HCT116 (cell line): ENCODE measurements at regions of chr20 and their contacts with region 1.

Region 1: GRCh38 chr20:25076731-25077609 is 5.0 kb downstream of the VSX1 start:
- DNase-seq: peak; percentile 73
- ATAC-seq: peak; percentile 92
- H3K4me3 ChIP-seq: no peak overlapping the region; a peak in 1 of 4 replicates
- H3K27ac ChIP-seq: no peak overlapping the region
- H3K4me1 ChIP-seq: peaks cover 17 to 21% of the 10 kb centered on the region in 2 experiments
- H3K27me3 ChIP-seq: peaks cover 41% of the 10 kb centered on the region
- CTCF ChIP-seq: peak; percentile 23 to 64 (median 62); a peak in 5 of 6 replicates
- POLR2A ChIP-seq: no peak
- RAD21 ChIP-seq: peak; percentile 26; the same call in 1 of the 2 replicates

Region 2: DNA sequence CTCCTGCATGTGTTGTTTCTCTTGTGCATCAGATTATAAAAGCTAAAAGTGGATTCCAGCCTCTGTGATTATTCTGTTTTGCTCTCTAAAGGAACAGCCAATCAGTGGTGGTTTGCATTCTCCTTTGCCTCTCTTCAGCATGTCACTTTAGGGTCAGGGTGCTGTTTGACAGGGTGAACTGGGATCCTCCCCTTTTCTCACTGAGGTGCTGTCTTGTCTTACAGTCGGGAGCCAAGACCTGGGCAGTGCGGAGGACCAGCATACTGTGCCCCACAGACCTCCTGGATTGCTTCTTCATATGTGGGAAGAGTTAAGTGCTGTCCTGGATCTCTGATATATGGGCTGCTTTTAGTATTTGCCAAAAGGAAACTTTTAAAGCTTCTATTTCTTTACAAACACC is 1235.3 kb before region 1 on chr20:
- CTCF ChIA-PET with region 1: no interaction called
- POLR2A ChIA-PET with region 1: no interaction called
- RAD21 ChIA-PET with region 1: no interaction called
- intact Hi-C with region 1: no loop called
- DNase-seq: no peak
- ATAC-seq: no peak
- H3K4me3 ChIP-seq: no peak overlapping the region
- H3K27ac ChIP-seq: no peak overlapping the region
- H3K4me1 ChIP-seq: no peaks in the 10 kb centered on the region
- H3K27me3 ChIP-seq: peaks cover 4% of the 10 kb centered on the region
- CTCF ChIP-seq: no peak
- POLR2A ChIP-seq: no peak
- RAD21 ChIP-seq: no peak

Region 3: GRCh38 chr20:25032478-25033280 is 44.3 kb before region 1 on chr20:
- CTCF ChIA-PET with region 1: no interaction called
- POLR2A ChIA-PET with region 1: no interaction called
- RAD21 ChIA-PET with region 1: no interaction called
- intact Hi-C with region 1: no loop called
- DNase-seq: no peak
- ATAC-seq: no peak
- H3K4me3 ChIP-seq: no peak overlapping the region
- H3K27ac ChIP-seq: no peak overlapping the region
- H3K4me1 ChIP-seq: no peaks in the 10 kb centered on the region
- H3K27me3 ChIP-seq: no peaks in the 10 kb centered on the region
- CTCF ChIP-seq: no peak
- POLR2A ChIP-seq: no peak
- RAD21 ChIP-seq: no peak

Region 4: GRCh38 chr20:25178563-25179438 is 101.8 kb after region 1 on chr20:
- CTCF ChIA-PET with region 1: no interaction called
- POLR2A ChIA-PET with region 1: no interaction called
- RAD21 ChIA-PET with region 1: no interaction called
- intact Hi-C with region 1: loop called (anchors 2 kb)
- DNase-seq: peak; percentile 61
- ATAC-seq: peak; percentile 93
- H3K4me3 ChIP-seq: no peak overlapping the region
- H3K27ac ChIP-seq: peak overlapping the region; percentile 3; the same call in 1 of the 2 replicates
- H3K4me1 ChIP-seq: peaks cover 5 to 13% of the 10 kb centered on the region in 2 experiments; a peak in 3 of 4 replicates
- H3K27me3 ChIP-seq: no peaks in the 10 kb centered on the region
- CTCF ChIP-seq: peak; percentile 78 to 93 (median 93)
- POLR2A ChIP-seq: no peak
- RAD21 ChIP-seq: peak; percentile 95